Mammary epithelial cell (primary cell): ENCODE measurements at regions of chr20 and their contacts with region 1.

Region 1: DNA sequence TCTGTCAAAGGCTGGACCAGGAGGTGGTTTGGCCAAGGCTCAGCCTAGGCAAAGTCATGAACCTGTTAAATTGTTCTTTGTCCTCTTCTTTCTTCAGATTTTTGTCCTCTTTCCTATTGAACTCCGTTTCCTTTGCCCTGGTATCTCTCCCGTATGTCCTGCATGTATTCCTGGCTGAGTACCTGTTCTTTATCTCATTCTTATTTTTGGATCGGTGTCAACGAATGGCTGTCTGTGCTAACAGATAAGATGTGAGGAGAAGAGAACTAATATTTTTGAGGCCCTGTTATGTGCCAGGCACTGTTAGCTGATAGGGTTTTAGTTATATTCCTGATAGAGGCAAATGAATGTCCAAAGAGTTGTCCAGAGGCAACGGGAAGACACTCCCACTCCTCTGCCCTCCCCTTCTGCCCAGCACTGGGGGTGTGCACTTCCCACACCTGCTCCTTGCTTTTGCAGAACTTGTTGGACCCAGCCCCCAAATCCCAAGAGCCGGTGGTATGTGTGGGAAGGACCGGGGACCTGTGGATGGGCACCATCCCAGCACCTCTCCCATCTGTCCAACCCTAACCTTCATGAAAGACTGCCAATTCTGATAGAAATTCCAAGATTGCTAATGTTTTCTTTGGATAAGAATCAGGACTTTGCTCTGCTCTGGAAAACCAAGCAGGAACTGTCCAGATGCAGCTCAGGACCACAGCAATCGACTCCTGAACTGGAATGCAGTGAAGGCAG is 20.6 kb downstream of the MMP24OS start:
- DNase-seq: no peak
- H3K4me3 ChIP-seq: no peak overlapping the region
- H3K27ac ChIP-seq: no peak overlapping the region
- H3K4me1 ChIP-seq: no peaks in the 10 kb centered on the region
- H3K27me3 ChIP-seq: no peaks in the 10 kb centered on the region
- CTCF ChIP-seq: no peak

Region 2: DNA sequence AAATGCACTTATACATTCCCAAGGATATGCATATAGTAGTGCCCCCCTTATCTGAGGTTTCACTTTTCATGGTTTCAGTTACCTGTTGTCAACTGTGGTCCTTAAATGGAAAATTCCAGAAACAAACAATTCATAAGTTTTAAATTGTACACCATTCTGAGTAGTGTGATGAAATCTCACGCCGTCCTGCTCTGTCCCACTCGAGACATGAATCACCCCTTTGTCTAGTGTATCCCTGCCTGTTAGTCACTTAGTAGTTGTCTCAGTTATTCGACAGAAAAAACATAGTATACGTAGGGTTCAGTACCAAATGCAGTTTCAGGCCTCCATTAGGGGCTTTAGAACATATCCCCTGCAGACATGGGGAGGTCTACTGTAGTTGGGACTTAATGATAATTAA is 641.9 kb before region 1 on chr20:
- CTCF ChIA-PET with region 1: no interaction called
- dilution Hi-C with region 1: no loop called
- in situ Hi-C with region 1: no loop called
- intact Hi-C with region 1: no loop called
- DNase-seq: peak; percentile 23
- H3K4me3 ChIP-seq: no peak overlapping the region
- H3K27ac ChIP-seq: no peak overlapping the region
- H3K4me1 ChIP-seq: no peaks in the 10 kb centered on the region
- H3K27me3 ChIP-seq: no peaks in the 10 kb centered on the region
- CTCF ChIP-seq: no peak

Region 3: DNA sequence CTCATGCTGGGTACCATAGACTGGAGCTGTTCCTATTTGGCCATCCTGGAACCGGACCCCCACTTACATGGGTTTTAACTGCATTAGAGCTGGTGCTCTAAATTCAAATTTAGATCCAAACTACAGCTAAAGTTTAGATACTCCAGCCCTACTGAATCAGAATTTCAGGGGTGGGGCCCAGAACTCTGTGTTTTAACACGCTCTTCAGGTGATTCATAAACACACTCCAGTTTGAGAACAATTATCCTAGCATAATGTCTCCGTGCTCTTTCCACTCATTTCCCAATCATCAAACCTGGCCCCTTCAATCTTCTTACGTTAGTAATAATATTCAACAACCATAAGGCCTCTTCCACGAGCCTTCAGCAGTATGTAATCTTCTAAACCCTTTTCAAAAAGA is 180.0 kb before region 1 on chr20:
- CTCF ChIA-PET with region 1: no interaction called
- dilution Hi-C with region 1: no loop called
- in situ Hi-C with region 1: no loop called
- intact Hi-C with region 1: no loop called
- DNase-seq: peak; percentile 63
- H3K4me3 ChIP-seq: no peak overlapping the region
- H3K27ac ChIP-seq: no peak overlapping the region
- H3K4me1 ChIP-seq: peaks cover 13% of the 10 kb centered on the region
- H3K27me3 ChIP-seq: no peaks in the 10 kb centered on the region
- CTCF ChIP-seq: no peak

Region 4: DNA sequence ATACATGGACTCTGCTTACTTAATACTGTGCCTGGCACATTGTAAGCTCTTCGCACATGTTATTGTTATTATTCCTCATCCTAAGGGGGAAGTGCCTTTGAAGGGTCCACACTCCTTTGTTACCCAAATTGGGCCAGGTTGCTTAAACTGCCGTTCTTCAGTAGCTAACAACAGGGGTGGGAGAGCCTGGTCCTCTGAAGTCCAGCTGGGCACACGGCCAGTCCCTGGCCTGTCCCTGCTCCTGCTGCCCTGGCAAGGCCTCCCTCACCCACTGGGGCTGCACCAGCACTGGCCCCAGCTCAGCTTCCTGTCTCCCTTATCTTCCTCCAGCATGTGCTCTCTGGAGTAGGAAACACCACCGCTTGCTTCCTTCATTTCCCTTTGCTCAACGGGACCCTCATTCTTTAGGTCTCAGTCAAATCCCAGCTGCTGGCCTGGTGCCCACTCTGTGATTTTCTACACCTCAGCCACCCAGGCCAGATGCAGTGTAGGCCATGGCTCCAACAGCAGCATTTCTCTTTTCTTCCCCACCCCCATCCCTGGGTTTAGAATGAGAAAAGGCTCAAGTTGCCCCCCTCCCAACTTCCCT is 91.0 kb before region 1 on chr20:
- CTCF ChIA-PET with region 1: no interaction called
- dilution Hi-C with region 1: loop called (anchors 5 kb)
- in situ Hi-C with region 1: no loop called
- intact Hi-C with region 1: no loop called
- DNase-seq: no peak
- H3K4me3 ChIP-seq: no peak overlapping the region
- H3K27ac ChIP-seq: no peak overlapping the region
- H3K4me1 ChIP-seq: peaks cover 5% of the 10 kb centered on the region
- H3K27me3 ChIP-seq: no peaks in the 10 kb centered on the region
- CTCF ChIP-seq: no peak

Region 5: DNA sequence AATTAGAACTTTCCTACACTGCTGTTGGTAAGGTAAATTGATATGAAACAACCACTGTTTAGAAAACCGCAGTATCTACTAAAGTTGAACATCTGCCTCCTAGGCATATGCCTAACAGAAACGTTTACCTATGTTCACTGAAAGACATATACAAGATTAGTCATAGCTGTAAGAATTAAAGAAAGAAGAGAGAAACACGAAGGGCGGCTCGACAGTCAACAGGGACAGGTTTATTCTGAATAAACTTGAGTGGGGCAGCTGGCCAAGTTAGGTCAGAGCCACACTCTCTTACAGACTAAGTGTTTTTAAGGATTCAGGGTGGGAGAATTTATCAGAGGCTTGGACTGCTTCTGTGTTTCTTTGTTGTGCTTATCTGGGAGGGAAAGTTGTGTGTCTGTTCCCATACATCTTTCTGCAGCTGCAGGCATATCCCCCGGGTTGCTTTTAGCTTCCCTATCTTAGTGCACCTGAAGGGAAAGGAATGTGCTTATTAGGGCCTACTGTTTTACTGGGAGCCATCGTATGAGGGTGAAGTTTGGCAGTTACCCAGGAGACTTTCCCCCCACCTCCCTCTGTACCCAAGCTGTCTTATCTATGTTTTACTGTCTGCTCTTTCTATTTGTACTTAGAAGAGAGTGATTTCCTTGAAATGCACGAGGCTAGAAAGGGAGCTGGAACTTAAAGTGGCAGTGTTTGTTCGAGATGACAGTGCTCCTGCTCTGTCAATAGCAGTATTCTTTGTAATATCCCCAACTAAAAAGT is 65.0 kb before region 1 on chr20:
- CTCF ChIA-PET with region 1: no interaction called
- dilution Hi-C with region 1: loop called (anchors 5 kb)
- in situ Hi-C with region 1: no loop called
- intact Hi-C with region 1: no loop called
- DNase-seq: peak; percentile 4
- H3K4me3 ChIP-seq: no peak overlapping the region
- H3K27ac ChIP-seq: no peak overlapping the region
- H3K4me1 ChIP-seq: no peaks in the 10 kb centered on the region
- H3K27me3 ChIP-seq: no peaks in the 10 kb centered on the region
- CTCF ChIP-seq: no peak

Region 6: GRCh38 chr20:35303735-35304491 is 46.6 kb after region 1 on chr20:
- CTCF ChIA-PET with region 1: no interaction called
- dilution Hi-C with region 1: no loop called
- in situ Hi-C with region 1: no loop called
- intact Hi-C with region 1: no loop called
- DNase-seq: peak; percentile 89
- H3K4me3 ChIP-seq: no peak overlapping the region
- H3K27ac ChIP-seq: peak overlapping the region; percentile 95
- H3K4me1 ChIP-seq: peaks cover 74% of the 10 kb centered on the region
- H3K27me3 ChIP-seq: no peaks in the 10 kb centered on the region
- CTCF ChIP-seq: peak; percentile 88 to 97

Region 7: GRCh38 chr20:35601008-35601973 is 343.9 kb after region 1 on chr20:
- CTCF ChIA-PET with region 1: no interaction called
- dilution Hi-C with region 1: no loop called
- in situ Hi-C with region 1: no loop called
- intact Hi-C with region 1: no loop called
- DNase-seq: peak; percentile 76
- H3K4me3 ChIP-seq: peak overlapping the region in 2 of 3 experiments; percentile 40 to 42
- H3K27ac ChIP-seq: no peak overlapping the region
- H3K4me1 ChIP-seq: peaks cover 13% of the 10 kb centered on the region
- H3K27me3 ChIP-seq: peaks cover 6% of the 10 kb centered on the region
- CTCF ChIP-seq: peak; percentile 22 to 55